Caco-2 (cell line): ENCODE measurements at regions of chr3 and their contacts with region 1.

Region 1: DNA sequence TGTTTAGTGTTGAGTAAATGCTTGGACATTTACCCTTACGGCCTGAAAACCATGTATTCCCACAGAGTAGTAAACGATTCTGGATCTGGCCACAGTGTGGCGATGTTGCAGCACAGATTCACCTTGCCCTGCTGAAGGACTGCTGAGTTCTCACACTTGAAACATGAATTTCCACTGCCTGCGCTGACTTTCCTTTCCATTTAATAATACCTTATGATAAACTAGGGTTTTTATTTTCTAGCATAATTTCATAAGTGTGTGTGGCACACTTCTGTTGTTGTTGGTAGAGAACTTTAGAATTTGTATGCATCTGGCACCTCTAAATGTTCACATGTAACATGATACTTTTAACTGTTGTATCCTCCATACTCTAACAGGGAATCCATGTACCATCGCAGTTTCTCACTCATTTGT is 53.9 kb downstream of the C3orf38 start:
- DNase-seq: peak; percentile 50 to 71
- H3K4me3 ChIP-seq: no peak overlapping the region
- H3K4me3 Mint-ChIP-seq: no peak overlapping the region
- H3K27ac Mint-ChIP-seq: no peak overlapping the region
- H3K4me1 ChIP-seq: no peaks in the 10 kb centered on the region
- H3K4me1 Mint-ChIP-seq: no peaks in the 10 kb centered on the region
- H3K27me3 ChIP-seq: no peaks in the 10 kb centered on the region
- H3K27me3 Mint-ChIP-seq: peaks cover 13% of the 10 kb centered on the region
- CTCF ChIP-seq: peak; percentile 76 to 84

Region 2: GRCh38 chr3:88225326-88226008 is 21.8 kb after region 1 on chr3:
- CTCF ChIA-PET with region 1: no interaction called
- POLR2A ChIA-PET with region 1: no interaction called
- intact Hi-C with region 1: no loop called
- DNase-seq: no peak
- H3K4me3 ChIP-seq: no peak overlapping the region
- H3K4me3 Mint-ChIP-seq: no peak overlapping the region
- H3K27ac Mint-ChIP-seq: no peak overlapping the region
- H3K4me1 ChIP-seq: no peaks in the 10 kb centered on the region
- H3K4me1 Mint-ChIP-seq: no peaks in the 10 kb centered on the region
- H3K27me3 ChIP-seq: no peaks in the 10 kb centered on the region
- H3K27me3 Mint-ChIP-seq: peaks cover 6% of the 10 kb centered on the region
- CTCF ChIP-seq: no peak

Region 3: GRCh38 chr3:89098964-89099585 is 895.4 kb after region 1 on chr3:
- CTCF ChIA-PET with region 1: no interaction called
- POLR2A ChIA-PET with region 1: no interaction called
- intact Hi-C with region 1: loop called (anchors 1 kb)
- DNase-seq: peak; percentile 38 to 56
- H3K4me3 ChIP-seq: no peak overlapping the region
- H3K4me3 Mint-ChIP-seq: no peak overlapping the region
- H3K27ac Mint-ChIP-seq: no peak overlapping the region
- H3K4me1 ChIP-seq: no peaks in the 10 kb centered on the region
- H3K4me1 Mint-ChIP-seq: no peaks in the 10 kb centered on the region
- H3K27me3 ChIP-seq: no peaks in the 10 kb centered on the region
- H3K27me3 Mint-ChIP-seq: no peaks in the 10 kb centered on the region
- CTCF ChIP-seq: peak; percentile 77 to 92

Region 4: DNA sequence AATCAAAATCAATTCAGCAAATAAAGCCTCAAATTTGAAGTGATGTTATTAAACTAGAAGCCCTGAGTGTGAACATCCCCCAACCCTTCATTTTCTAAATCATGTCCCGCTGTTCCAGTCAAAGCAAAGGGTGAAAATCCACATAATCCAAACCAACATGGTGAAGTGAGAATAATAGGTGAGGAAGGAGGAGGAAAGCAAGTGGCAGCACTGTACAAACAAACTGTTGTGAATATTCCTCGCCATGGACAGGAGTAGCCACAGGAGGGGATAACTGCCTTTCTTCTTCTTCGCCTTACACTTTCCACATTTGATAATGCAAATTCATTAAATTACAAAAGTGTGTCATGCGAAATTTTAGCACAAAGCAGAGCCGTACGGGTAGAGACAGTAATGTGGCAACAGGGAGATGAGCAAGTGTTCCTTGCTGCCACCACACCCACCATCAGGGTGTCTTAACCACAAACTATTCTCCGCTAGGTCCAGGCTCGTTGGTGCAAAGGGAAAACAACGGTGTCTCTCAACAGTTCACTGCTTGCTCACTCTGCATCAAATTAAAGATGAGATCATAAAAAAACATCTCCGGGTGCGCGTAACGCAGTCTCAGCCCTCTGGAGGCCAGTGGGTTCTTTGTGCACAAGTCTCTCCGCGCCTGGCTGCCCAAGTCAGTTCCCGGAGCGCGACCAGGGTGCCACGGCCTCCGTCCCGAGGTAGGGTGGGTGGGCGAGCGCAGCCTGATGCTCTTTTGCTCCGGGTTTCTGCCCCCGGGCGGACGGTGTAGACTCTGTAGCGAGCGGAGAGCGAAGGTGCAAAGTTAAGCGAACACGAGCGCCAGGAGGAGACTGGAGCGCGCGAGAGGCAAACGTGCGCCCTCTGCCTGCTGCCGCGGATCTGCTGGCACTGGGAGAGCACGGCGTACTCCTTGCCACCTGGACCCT is 910.5 kb after region 1 on chr3:
- CTCF ChIA-PET with region 1: no interaction called
- POLR2A ChIA-PET with region 1: no interaction called
- intact Hi-C with region 1: loop called (anchors 1 kb)
- DNase-seq: peak; percentile 61 to 67
- H3K4me3 ChIP-seq: peak overlapping the region; percentile 30
- H3K4me3 Mint-ChIP-seq: peak overlapping the region; percentile 67
- H3K27ac Mint-ChIP-seq: no peak overlapping the region
- H3K4me1 ChIP-seq: no peaks in the 10 kb centered on the region
- H3K4me1 Mint-ChIP-seq: no peaks in the 10 kb centered on the region
- H3K27me3 ChIP-seq: no peaks in the 10 kb centered on the region
- H3K27me3 Mint-ChIP-seq: no peaks in the 10 kb centered on the region
- CTCF ChIP-seq: peak; percentile 49 to 83

Region 5: DNA sequence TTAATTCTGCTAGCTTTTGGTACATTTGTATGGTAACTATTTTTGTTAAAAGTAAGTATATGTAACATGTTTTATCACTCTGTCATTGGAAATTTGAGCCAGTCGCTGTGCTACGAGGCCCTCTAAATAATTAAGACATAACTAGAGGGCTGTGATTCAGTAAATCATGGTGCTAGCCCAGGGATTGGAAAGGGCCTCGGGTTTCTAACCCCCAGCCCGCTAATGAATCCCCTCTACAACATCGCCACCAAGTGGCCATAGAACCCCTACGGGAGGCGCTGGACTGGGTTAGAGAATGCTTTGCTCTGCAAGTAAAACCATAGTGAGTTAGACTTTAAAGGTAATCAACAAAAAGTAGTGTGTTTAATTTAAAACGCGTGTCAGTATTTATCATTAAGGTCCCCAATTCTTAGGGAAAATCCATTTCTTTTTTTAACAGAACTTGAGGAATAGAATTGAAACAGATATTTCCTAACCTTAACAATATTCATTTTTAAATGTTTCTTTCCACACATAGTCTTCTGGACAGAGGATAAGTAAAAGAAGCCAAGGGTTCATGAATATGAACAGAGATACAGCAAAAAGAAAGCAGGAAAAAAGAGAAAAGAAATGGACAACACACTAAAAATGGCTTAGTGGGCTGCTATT is 1648.4 kb after region 1 on chr3:
- CTCF ChIA-PET with region 1: no interaction called
- POLR2A ChIA-PET with region 1: no interaction called
- intact Hi-C with region 1: loop called (anchors 5 kb)
- DNase-seq: peak; percentile 52 to 69
- H3K4me3 ChIP-seq: no peak overlapping the region
- H3K4me3 Mint-ChIP-seq: no peak overlapping the region
- H3K27ac Mint-ChIP-seq: no peak overlapping the region
- H3K4me1 ChIP-seq: no peaks in the 10 kb centered on the region
- H3K4me1 Mint-ChIP-seq: no peaks in the 10 kb centered on the region
- H3K27me3 ChIP-seq: no peaks in the 10 kb centered on the region
- H3K27me3 Mint-ChIP-seq: no peaks in the 10 kb centered on the region
- CTCF ChIP-seq: peak; percentile 59 to 78

Region 6: GRCh38 chr3:90184861-90185260 is 1981.2 kb after region 1 on chr3:
- CTCF ChIA-PET with region 1: no interaction called
- POLR2A ChIA-PET with region 1: no interaction called
- intact Hi-C with region 1: loop called (anchors 5 kb)
- DNase-seq: no peak
- H3K4me3 ChIP-seq: no peak overlapping the region
- H3K4me3 Mint-ChIP-seq: no peak overlapping the region
- H3K27ac Mint-ChIP-seq: no peak overlapping the region
- H3K4me1 ChIP-seq: no peaks in the 10 kb centered on the region
- H3K4me1 Mint-ChIP-seq: no peaks in the 10 kb centered on the region
- H3K27me3 ChIP-seq: no peaks in the 10 kb centered on the region
- H3K27me3 Mint-ChIP-seq: no peaks in the 10 kb centered on the region
- CTCF ChIP-seq: no peak